Testis (tissue), 5 donors: ENCODE measurements at regions of chr18 and their contacts with region 1.

Region 1: DNA sequence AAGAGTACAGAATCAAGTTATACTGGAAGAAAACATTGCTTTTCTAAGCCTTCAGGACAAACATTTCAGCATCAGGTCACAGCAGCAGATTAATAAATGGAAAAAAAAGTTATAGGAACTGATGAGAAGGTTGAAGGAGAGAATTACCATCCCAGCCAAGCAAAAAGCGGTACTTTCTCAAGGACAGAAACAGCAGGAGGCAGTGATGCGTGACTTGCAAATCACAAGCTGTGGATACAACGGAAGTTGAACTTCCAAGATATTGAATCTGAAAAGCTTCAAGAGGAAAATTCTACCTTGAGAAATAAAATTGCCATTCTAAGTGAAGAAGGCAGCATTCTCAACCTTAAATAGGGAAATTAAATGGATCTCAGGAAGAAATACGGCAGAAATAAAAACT is 18.5 kb upstream of the SERPINB12 start:
- DNase-seq: no peak
- H3K4me3 ChIP-seq: no peak overlapping the region
- H3K27ac ChIP-seq: no peak overlapping the region
- H3K4me1 ChIP-seq: no peaks in the 10 kb centered on the region
- H3K27me3 ChIP-seq: no peaks in the 10 kb centered on the region
- CTCF ChIP-seq: no peak
- POLR2A ChIP-seq: no peak

Region 2: DNA sequence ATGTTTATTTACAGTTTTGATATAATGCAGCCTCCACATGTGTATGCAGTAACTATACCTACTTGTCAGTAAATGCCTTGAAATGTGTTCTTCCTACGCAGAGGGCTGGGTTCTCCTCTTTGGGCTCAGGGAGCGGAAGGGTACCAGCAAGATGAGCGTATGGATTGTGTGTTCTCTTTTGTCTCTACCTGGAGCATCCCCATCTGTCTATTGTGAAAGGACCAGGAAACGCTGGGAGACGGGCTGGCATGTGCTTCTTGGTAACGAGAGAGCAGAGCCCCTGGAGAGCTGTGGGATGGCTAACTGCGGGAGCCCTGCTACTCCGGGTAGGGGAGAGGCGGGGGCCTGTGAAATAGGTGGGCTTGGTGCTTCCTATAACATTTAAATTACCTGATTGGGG is 285.0 kb before region 1 on chr18:
- intact Hi-C with region 1: no loop called
- DNase-seq: no peak
- H3K4me3 ChIP-seq: no peak overlapping the region
- H3K27ac ChIP-seq: peak overlapping the region; percentile 83 to 89
- H3K4me1 ChIP-seq: peaks cover 44% of the 10 kb centered on the region
- H3K27me3 ChIP-seq: no peaks in the 10 kb centered on the region
- CTCF ChIP-seq: no peak
- POLR2A ChIP-seq: no peak

Region 3: DNA sequence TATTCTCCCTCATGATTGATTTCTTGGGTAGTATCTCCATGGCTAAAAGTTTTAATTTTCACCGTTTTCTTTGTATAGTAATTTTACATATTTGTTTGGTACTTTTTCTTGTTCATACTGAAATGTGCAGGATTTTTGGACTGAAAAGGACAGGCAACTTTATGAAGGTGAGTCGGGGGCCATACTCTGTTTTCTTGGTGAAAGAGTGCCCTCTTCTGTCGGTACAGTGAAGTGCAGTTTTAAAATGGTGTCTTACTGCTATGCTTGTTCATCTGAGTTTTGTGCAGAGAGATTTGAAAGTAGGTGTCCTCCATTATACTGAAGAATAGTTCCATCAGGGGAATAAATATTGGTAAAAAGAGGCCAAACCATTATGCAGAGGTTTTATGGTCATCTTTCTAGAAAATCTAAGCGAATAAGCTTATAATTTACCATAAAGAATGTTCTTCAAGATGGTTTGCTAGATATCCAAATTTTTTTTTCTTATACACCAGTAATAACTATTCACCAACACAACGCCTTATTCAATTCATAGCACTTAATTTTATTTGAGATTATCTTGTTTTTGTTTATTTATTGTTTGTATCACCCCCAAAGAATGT is 54.8 kb after region 1 on chr18:
- intact Hi-C with region 1: loop called (anchors 5 kb)
- DNase-seq: peak; percentile 61
- H3K4me3 ChIP-seq: no peak overlapping the region
- H3K27ac ChIP-seq: no peak overlapping the region
- H3K4me1 ChIP-seq: no peaks in the 10 kb centered on the region
- H3K27me3 ChIP-seq: no peaks in the 10 kb centered on the region
- CTCF ChIP-seq: peak; percentile 57 to 67 (median 60)
- POLR2A ChIP-seq: no peak